Vagina (tissue), 2 donors: ENCODE measurements at regions of chr1 and their contacts with region 1.

Region 1: DNA sequence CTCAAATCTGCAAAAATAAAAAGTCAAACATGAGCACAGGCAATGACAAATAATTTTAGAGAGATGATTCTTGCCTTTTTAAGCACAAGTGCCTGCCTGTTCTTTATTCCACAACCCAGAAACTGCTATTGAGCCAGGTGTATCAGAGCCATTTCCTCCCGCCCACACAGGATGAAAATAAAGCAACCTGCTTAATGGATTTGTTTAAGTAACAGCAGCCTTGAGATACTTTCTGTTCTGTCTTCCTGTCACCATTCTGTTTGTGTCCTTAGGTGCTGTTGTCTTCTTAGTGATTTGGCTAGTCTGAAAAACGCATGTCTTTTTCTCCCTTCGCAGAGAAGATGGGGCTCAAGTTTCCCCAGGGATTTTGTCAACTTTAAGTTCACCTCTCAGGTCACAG is 11.4 kb downstream of the RPE65 start:
- DNase-seq: no peak
- H3K4me3 ChIP-seq: no peak overlapping the region
- H3K27ac ChIP-seq: no peak overlapping the region
- H3K4me1 ChIP-seq: no peaks in the 10 kb centered on the region
- H3K27me3 ChIP-seq: no peaks in the 10 kb centered on the region
- CTCF ChIP-seq: no peak
- POLR2A ChIP-seq: no peak

Region 2: GRCh38 chr1:66695116-66695515 is 1743.2 kb before region 1 on chr1:
- intact Hi-C with region 1: loop called (anchors 5 kb)
- DNase-seq: no peak
- H3K4me3 ChIP-seq: no peak overlapping the region
- H3K27ac ChIP-seq: no peak overlapping the region
- H3K4me1 ChIP-seq: no peaks in the 10 kb centered on the region
- H3K27me3 ChIP-seq: no peaks in the 10 kb centered on the region
- CTCF ChIP-seq: no peak
- POLR2A ChIP-seq: no peak